Activated CD8-positive, alpha-beta T cell treated with anti-CD3 and anti-CD28 coated beads for 36 hours (primary cell): ENCODE measurements at regions of chr5 and their contacts with region 1.

Region 1: GRCh38 chr5:151740336-151740942 is 18.0 kb downstream of the ATOX1 start:
- DNase-seq: peak; percentile 59
- ATAC-seq: peak; percentile 65
- H3K4me3 Mint-ChIP-seq: no peak overlapping the region
- H3K27ac Mint-ChIP-seq: no peak overlapping the region
- H3K4me1 Mint-ChIP-seq: peaks cover 14% of the 10 kb centered on the region
- H3K27me3 Mint-ChIP-seq: no peaks in the 10 kb centered on the region
- CTCF ChIP-seq: peak; percentile 83

Region 2: DNA sequence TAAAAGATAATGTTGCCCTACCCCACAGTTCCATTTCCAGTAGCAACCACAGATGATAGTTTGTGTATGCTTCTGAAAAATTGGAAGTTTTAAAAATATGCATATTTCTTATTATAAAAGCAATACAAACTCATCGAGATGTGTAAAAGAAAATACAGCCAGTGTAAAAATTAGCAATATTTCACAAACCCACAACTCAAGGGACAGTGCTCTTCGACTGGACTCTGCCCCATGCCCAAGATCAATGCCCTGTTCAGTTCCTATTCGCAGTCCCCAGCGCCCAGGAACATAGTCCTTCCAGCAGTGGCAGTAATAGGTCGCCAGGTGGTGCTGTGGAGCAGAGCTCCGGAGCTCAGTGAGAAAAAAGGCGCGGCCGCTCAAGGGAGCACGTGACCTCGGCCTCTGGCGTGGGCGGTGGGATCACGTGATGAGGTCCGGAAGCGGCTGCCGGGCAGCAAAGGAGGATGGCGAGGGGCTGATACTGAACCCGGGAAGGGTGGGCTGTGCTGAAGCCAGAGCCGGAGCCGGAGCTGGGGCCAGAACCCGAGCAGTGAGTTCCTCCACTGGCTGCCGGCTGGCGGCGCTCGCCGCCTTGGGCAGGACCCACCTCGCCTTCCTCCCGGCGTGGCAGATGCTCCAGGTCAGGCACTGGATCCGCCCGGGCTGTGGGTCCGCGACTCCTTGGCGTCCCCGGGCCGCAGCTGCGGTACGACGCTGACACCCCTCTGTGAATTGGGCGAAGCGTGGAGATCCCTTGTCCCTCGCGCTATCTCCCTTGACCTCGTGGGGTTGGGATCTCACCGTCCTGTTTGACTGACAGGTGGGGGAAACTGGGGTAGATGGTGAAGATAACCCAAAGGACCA is 293.0 kb before region 1 on chr5 and contains the start of gene SLC36A1:
- CTCF ChIA-PET with region 1: interaction called, 3 read pairs
- POLR2A ChIA-PET with region 1: no interaction called
- intact Hi-C with region 1: loop called (anchors 5 kb)
- DNase-seq: peak; percentile 98
- ATAC-seq: peak; percentile 98
- H3K4me3 Mint-ChIP-seq: peak within 1 kb of the TSS; percentile 93
- H3K27ac Mint-ChIP-seq: peak within 1 kb of the TSS; percentile 87
- H3K4me1 Mint-ChIP-seq: peaks cover 26% of the 10 kb centered on the region
- H3K27me3 Mint-ChIP-seq: peaks cover 10% of the 10 kb centered on the region
- CTCF ChIP-seq: peak; percentile 90
- total RNA-seq, gene SLC36A1: 3.5 to 3.7 TPM

Region 3: GRCh38 chr5:151651997-151652645 is 88.3 kb before region 1 on chr5:
- CTCF ChIA-PET with region 1: interaction called, 111 read pairs
- POLR2A ChIA-PET with region 1: no interaction called
- intact Hi-C with region 1: no loop called
- DNase-seq: peak; percentile 81
- ATAC-seq: peak; percentile 99
- H3K4me3 Mint-ChIP-seq: no peak overlapping the region
- H3K27ac Mint-ChIP-seq: no peak overlapping the region
- H3K4me1 Mint-ChIP-seq: no peaks in the 10 kb centered on the region
- H3K27me3 Mint-ChIP-seq: no peaks in the 10 kb centered on the region
- CTCF ChIP-seq: peak; percentile 66

Region 4: GRCh38 chr5:151719228-151720000 is 21.0 kb before region 1 on chr5:
- CTCF ChIA-PET with region 1: interaction called, 31 read pairs
- POLR2A ChIA-PET with region 1: interaction called, 4 read pairs
- intact Hi-C with region 1: no loop called
- DNase-seq: peak; percentile 34
- ATAC-seq: peak; percentile 60
- H3K4me3 Mint-ChIP-seq: no peak overlapping the region
- H3K27ac Mint-ChIP-seq: no peak overlapping the region
- H3K4me1 Mint-ChIP-seq: peaks cover 9% of the 10 kb centered on the region
- H3K27me3 Mint-ChIP-seq: no peaks in the 10 kb centered on the region
- CTCF ChIP-seq: peak; percentile 55

Region 5: GRCh38 chr5:151751091-151751490 is 10.7 kb after region 1 on chr5:
- CTCF ChIA-PET with region 1: interaction called, 53 read pairs
- POLR2A ChIA-PET with region 1: interaction called, 4 read pairs
- intact Hi-C with region 1: no loop called
- DNase-seq: no peak
- ATAC-seq: no peak
- H3K4me3 Mint-ChIP-seq: no peak overlapping the region
- H3K27ac Mint-ChIP-seq: no peak overlapping the region
- H3K4me1 Mint-ChIP-seq: peaks cover 33% of the 10 kb centered on the region
- H3K27me3 Mint-ChIP-seq: no peaks in the 10 kb centered on the region
- CTCF ChIP-seq: no peak

Region 6: DNA sequence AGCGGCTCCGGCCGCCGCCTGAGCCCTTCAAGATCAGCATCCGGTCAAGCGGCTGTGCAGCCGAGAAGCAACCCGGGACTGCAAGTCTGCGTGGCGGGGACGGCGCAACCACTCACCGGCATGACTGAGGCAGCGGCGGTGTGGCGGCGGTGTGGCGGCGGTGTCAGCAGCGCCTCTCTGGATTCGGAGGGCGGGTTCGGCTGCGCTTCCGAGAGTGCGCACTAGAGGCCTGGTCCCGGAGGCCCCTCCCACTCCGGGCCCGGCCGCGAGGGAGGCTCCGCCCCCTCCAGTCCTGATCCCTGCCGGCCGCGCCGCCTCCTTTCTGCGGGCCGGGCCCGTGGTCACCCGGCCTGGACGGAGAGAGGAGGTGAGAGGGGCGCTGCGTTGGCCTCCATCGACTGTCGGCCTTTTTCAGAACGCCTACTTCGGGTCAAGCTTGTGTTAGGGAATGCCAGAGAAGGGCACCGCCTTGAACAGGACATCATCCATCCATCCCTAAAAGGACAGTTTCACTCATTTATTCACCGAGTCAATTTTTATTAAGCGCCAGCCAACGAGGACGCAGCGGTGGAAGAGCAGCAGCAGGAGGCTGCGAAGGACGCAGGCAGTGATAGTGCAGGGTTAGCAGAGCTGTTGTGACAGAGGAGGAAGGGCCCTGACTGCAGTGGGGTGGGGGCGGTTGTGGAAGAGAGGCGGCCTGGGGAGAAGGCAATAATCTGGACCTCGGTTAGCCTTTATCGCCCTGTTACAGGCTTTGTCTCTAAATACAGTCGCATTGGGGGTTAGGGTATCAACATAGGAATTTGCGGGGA is 18.2 kb after region 1 on chr5 and contains the start of gene ATOX1:
- CTCF ChIA-PET with region 1: interaction called, 53 read pairs
- POLR2A ChIA-PET with region 1: interaction called, 3 read pairs
- intact Hi-C with region 1: no loop called
- DNase-seq: peak; percentile 90
- ATAC-seq: peak; percentile 99
- H3K4me3 Mint-ChIP-seq: peak within 1 kb of the TSS; percentile 79
- H3K27ac Mint-ChIP-seq: peak within 1 kb of the TSS; percentile 91
- H3K4me1 Mint-ChIP-seq: peaks cover 41% of the 10 kb centered on the region
- H3K27me3 Mint-ChIP-seq: no peaks in the 10 kb centered on the region
- CTCF ChIP-seq: peak; percentile 24
- total RNA-seq, gene ATOX1: 69.6 to 73.3 TPM

Region 7: DNA sequence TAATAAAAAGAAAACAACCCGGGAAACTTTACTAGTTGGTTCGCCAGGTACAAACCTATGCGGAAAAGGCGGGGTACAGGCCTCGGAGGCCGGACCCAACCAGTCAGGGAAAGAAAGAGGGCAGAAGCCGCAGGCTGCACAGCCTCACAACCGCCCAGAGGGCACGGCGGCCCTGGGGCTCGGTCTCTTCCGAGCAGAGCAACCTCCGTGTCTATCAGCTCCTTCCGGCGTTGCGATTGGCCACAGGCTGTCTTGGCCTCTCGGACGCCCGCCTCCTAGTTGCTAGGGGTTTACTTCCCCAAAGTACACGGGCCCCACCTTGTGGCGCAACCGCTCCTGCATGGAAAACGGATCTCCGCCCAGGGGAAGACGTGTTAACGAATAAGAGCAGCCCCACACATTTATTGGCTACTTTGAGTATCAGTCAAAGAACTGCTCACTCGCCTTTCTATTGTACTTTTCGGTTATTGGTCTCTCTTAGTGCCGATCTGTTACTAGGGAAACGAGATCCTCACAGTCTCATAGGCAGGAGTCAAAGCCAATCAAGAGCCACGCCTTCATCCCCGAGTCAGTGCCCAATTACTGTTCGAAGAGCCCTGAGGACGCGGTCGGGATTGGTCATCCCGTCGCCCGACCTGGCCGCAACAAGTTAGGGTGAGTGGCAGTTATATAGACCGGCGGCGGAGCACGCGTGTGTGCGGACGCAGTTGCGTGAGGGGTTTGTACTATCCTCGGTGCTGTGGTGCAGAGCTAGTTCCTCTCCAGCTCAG is 31.0 kb after region 1 on chr5 and contains the start of gene G3BP1:
- CTCF ChIA-PET with region 1: interaction called, 12 read pairs
- POLR2A ChIA-PET with region 1: no interaction called
- intact Hi-C with region 1: no loop called
- DNase-seq: peak; percentile 100
- ATAC-seq: peak; percentile 84
- H3K4me3 Mint-ChIP-seq: peak within 1 kb of the TSS; percentile 87
- H3K27ac Mint-ChIP-seq: peak within 1 kb of the TSS; percentile 84
- H3K4me1 Mint-ChIP-seq: peaks cover 31% of the 10 kb centered on the region
- H3K27me3 Mint-ChIP-seq: no peaks in the 10 kb centered on the region
- CTCF ChIP-seq: peak; percentile 25
- total RNA-seq, gene G3BP1: 247 to 253 TPM

Region 8: DNA sequence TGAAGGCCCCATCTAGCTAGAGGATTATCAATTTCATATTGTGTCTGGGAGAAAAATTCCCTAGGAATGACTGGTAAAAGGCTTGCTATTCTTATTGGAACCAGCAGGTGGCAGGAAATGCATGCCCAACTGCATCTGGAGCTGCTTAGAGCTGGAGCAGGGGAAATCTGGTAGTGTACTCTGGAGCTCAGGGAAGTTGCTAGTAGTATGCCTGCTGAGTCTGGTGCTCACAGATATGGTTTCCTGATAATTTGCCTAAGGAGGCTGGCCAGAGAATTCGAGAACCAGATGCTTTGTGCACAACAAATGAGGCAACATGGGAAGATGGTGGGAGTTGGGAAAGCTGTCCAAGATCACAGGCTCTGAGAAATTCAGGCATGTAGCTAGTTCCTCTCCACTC is 85.0 kb after region 1 on chr5:
- CTCF ChIA-PET with region 1: no interaction called
- POLR2A ChIA-PET with region 1: no interaction called
- intact Hi-C with region 1: no loop called
- DNase-seq: peak; percentile 46
- ATAC-seq: peak; percentile 51
- H3K4me3 Mint-ChIP-seq: no peak overlapping the region
- H3K27ac Mint-ChIP-seq: no peak overlapping the region
- H3K4me1 Mint-ChIP-seq: peaks cover 3% of the 10 kb centered on the region
- H3K27me3 Mint-ChIP-seq: no peaks in the 10 kb centered on the region
- CTCF ChIP-seq: peak; percentile 88